GM23248 (cell line): ENCODE measurements at regions of chr20 and their contacts with region 1.

Region 1: DNA sequence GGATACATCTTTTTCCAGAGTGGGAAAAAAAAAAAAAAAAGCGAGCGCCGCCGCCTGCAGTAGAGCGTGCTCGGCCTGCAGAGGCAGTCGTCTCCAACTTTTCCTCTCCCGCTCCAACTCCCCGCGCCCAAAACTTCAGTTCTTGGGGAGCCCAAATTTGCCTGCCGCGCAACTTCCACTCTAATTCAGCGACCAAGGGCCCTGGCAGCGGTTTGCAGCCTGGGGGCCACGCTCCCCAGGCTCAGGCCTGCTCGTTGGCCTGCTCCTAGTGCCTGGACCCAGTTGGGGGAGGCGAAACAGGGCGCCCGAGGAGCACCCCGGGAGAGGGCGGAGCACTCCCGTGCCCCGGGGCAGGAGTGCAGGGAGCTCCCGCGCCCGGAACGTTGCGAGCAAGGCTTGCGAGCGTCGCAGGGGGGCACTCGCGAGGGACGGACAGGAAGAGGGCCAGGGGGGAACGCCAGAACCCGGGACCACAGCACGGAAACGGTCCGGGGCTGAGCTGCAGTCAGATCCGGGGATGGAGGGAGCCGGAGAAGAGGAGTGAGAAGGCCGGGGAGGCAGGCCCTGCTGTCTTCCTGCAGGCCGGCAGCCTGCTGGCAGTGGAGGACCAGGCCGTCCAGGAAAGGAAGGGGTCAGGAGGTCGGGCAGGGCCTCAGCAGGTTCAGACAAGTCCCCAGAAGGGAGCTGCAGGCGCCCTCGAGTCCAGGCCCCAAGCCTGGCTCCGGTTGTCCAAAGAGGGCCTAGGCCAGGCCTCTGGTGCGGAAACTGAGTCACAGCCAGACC is at the start of gene STX16:
- DNase-seq: peak; percentile 97
- H3K4me3 ChIP-seq: peak within 1 kb of the TSS; percentile 97
- H3K27ac ChIP-seq: peak within 1 kb of the TSS; percentile 82
- H3K4me1 ChIP-seq: peaks cover 41% of the 10 kb centered on the region
- H3K27me3 ChIP-seq: no peaks in the 10 kb centered on the region
- total RNA-seq, gene STX16: 15.8 and 17.6 TPM in 2 replicates

Region 2: DNA sequence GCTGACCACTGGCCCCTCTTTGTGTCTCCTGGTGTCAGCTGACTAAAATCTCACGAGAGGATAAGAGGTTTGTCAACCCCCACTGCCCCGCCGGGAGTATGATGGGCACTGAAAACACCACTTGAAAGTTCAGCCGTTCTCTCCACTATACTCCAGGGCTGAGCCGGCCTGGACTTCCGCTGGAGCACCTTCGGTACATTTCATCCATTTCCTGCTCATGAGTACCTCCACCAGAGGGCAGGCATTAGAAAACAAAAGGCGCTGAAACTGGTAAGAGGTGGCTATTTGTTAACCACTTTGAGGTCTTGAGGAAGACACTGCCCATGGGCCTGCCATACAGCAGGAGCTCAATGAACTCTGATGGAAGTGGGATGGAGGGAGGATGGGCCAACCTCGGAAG is 404.6 kb before region 1 on chr20:
- in situ Hi-C with region 1: loop called (anchors 10 kb)
- DNase-seq: peak; percentile 24
- H3K4me3 ChIP-seq: no peak overlapping the region
- H3K27ac ChIP-seq: no peak overlapping the region
- H3K4me1 ChIP-seq: no peaks in the 10 kb centered on the region
- H3K27me3 ChIP-seq: 0 out of 2 replicates have a peak, but pooled peaks cover 2% of the 10 kb centered on the region

Region 3: DNA sequence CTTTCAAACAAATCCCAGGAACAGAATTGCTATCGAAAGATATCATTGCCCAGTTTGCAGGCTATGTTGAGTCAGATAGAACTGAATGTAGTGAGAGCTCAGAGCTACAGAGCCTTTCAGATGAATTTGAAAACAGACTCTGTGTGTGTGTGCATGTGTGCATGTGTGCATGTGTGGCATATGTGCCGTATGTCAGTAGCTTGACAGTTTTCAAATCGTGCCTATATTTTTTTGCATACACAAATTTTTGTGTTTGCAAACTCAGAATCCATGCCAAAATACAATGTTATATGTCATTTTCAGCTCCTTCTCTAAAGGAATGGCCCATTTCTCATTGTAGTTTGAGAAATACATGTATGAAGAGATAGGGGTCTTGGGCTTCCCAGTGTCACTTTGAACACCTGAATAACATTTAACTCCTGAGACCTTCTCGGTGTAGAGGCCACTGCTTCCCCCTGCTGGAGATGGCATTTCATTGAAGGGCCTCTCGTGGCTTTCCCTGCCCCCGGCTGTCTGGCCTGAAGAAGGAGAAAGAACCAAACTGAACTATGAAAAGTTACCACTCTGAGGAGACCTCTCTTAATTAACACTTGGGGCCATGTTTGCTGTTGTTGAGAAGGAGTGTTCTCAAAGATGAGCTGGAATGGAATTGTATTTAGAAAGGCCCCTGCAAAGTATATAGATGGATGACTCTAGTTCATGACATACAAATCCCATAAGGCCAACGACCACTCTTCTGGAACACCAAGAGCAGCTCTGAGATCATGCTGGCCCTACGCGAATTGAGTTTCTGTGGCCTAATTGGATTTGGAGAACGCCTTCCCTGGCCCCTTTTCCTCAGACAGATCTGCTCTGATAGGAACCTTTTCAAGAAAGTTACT is 203.2 kb before region 1 on chr20:
- in situ Hi-C with region 1: no loop called
- DNase-seq: peak; percentile 78
- H3K4me3 ChIP-seq: no peak overlapping the region
- H3K27ac ChIP-seq: no peak overlapping the region
- H3K4me1 ChIP-seq: no peaks in the 10 kb centered on the region
- H3K27me3 ChIP-seq: no peaks in the 10 kb centered on the region